Sigmoid colon (tissue), 7 donors: ENCODE measurements at regions of chr17 and their contacts with region 1.

Region 1: DNA sequence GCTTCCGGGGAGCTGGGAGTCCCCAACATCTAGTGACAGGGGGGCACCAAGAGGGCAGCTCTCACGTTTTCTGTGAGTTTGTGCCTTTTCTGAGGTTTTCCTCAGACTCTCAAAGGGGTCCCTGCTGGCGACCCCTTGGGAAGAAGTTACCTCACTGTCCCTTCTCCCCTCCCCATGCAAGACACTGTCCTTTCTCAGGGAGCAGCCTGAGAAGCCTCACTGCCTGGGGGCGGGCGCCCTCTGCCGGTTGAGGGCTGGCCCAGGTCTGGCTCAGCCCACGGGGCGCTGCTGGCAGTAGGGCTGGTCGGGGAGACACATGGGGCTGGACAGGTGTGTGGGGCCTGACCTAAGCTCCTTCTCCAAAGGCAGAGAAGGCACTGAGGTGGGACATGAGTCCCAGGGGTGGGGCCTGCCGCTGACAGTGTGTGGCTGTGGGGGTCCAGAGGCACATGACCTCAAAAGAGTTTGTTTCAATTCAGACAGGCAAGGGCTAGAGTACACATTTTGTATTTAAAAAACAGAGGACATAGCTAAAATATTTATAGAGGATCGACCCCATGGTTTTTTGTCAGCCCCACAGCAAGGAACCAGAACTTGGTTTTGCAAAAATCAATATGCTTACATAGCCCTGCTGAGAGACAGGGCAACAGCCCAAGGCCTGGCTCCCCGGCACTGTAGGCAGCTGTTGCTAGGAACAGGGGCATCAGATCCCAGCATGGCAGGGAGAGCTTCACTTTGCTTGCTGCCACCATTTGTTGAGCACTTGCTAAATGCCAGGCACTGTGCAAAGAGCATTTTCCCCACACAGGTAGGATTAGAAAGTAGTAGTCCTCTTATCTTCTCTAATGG is 18.5 kb upstream of the ALDH3A1 start:
- DNase-seq: peak; percentile 88
- H3K4me3 ChIP-seq: no peak overlapping the region
- H3K27ac ChIP-seq: no peak overlapping the region
- H3K4me1 ChIP-seq: peaks cover 0 to 21% (median 14%) of the 10 kb centered on the region in 4 donors
- H3K27me3 ChIP-seq: no peaks in the 10 kb centered on the region
- CTCF ChIP-seq: peak; percentile 91 to 96 (median 94)
- EP300 ChIP-seq: no peak
- POLR2A ChIP-seq: no peak

Region 2: DNA sequence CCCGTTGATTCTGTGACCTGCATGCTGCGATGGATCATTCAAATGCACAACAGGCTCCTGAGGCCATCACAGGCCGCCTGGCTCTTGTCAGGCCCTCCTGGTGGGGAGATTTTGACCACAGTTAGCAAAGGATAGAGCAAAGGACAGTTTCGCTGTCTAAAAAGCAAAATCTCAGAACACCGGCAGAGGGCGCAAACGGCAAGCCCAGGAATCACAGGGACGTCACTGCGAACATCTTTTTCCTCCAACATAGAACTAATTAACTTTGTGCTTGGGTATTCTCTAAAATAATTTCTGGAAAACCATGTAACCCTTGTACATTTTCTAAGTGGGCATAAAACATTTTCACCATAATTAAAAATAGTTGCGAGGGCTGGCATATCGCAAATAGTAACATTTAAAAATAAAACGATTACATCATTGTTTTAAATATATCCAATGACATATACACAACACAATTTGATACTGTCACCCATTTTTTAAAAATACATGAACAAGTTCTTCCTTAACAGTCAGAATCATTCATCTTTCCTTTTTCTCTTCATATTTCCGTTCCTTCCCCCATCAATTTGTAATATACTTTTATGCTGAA is 252.7 kb before region 1 on chr17:
- intact Hi-C with region 1: loop called (anchors 1 kb)
- DNase-seq: peak; percentile 84
- H3K4me3 ChIP-seq: no peak overlapping the region
- H3K27ac ChIP-seq: peak overlapping the region in 3 of 4 donors; percentile 23 to 68 (median 35)
- H3K4me1 ChIP-seq: peaks cover 0 to 23% (median 8%) of the 10 kb centered on the region in 4 donors
- H3K27me3 ChIP-seq: no peaks in the 10 kb centered on the region
- CTCF ChIP-seq: peak; percentile 85 to 96 (median 95)
- EP300 ChIP-seq: no peak
- POLR2A ChIP-seq: no peak

Region 3: DNA sequence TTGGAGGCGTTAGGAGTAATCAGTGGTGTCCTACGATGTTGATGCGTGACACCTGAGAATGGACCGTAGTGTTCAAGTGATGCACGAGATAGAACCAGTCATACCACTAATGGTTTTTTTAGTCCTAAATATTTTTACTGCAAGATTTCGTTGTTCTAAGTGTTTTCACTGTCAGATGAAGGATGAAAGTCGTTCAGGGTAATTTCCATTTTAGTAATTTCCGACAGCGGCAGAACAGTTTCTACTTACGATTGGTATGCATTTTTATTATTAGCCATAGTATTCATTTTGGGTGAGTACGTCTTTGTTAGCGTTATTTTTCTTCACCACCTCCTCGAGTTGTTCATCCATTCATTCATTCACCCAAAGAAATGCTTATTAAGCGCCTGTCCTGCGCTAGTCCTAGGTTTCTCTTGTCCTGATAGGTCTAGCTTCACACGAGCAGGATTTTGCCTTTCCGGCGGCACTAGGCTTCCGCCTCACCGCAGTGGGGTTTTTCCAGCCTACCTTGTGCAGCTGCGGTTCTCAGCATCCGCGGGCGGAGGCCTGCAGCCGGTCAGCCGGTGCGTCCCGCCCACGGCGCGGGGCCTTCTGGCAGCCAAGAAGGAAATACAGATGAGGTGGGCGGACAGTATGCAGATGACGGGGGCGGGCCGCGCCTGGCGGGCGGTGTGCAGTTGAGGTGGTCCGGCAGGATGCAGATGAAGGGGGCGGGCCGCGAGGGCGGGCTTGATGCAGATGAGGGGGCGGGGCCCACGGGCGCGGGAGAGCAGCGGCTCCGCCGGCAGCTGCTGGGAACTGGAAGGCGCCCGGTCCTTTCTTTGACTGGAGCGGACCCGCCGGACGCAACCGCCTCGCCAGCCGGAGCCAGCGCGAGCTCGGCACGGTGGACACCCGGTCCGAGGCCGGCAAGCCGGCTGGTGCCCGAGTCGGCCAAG is 388.9 kb after region 1 on chr17:
- intact Hi-C with region 1: no loop called
- DNase-seq: peak; percentile 95
- H3K4me3 ChIP-seq: peak overlapping the region; percentile 41 to 78 (median 61)
- H3K27ac ChIP-seq: peak overlapping the region; percentile 57 to 72 (median 68)
- H3K4me1 ChIP-seq: peaks cover 0 to 20% (median 16%) of the 10 kb centered on the region in 4 donors
- H3K27me3 ChIP-seq: no peaks in the 10 kb centered on the region
- CTCF ChIP-seq: no peak
- EP300 ChIP-seq: no peak
- POLR2A ChIP-seq: peak in 1 of 2 donors; percentile 29